B cell (primary cell): ENCODE measurements at regions of chr19 and their contacts with region 1.

Region 1: GRCh38 chr19:40974633-40975037 is 16.4 kb upstream of the CYP2B6 start:
- DNase-seq: peak; percentile 81
- ATAC-seq: peak; percentile 64
- H3K4me3 ChIP-seq: no peak overlapping the region
- H3K4me3 Mint-ChIP-seq: no peak overlapping the region
- H3K27ac ChIP-seq: no peak overlapping the region
- H3K27ac Mint-ChIP-seq: no peak overlapping the region
- H3K4me1 ChIP-seq: no peaks in the 10 kb centered on the region
- H3K4me1 Mint-ChIP-seq: peaks cover 1% of the 10 kb centered on the region
- H3K27me3 ChIP-seq: peaks cover 0 to 13% (median 6%) of the 10 kb centered on the region in 4 experiments
- H3K27me3 Mint-ChIP-seq: peaks cover 40% of the 10 kb centered on the region
- CTCF ChIP-seq: peak; percentile 93

Region 2: GRCh38 chr19:40908976-40909375 is 65.7 kb before region 1 on chr19:
- CTCF ChIA-PET with region 1: no interaction called
- POLR2A ChIA-PET with region 1: no interaction called
- intact Hi-C with region 1: no loop called
- DNase-seq: peak; percentile 66
- ATAC-seq: no peak
- H3K4me3 ChIP-seq: peak overlapping the region in 2 of 5 experiments; percentile 60 to 64
- H3K4me3 Mint-ChIP-seq: no peak overlapping the region
- H3K27ac ChIP-seq: no peak overlapping the region
- H3K27ac Mint-ChIP-seq: no peak overlapping the region
- H3K4me1 ChIP-seq: peaks cover 5 to 16% of the 10 kb centered on the region in 2 donors
- H3K4me1 Mint-ChIP-seq: peaks cover 5% of the 10 kb centered on the region
- H3K27me3 ChIP-seq: peaks cover 0 to 16% (median 0%) of the 10 kb centered on the region in 4 experiments
- H3K27me3 Mint-ChIP-seq: peaks cover 54% of the 10 kb centered on the region
- CTCF ChIP-seq: no peak

Region 3: GRCh38 chr19:41144403-41144802 is 169.8 kb after region 1 on chr19:
- CTCF ChIA-PET with region 1: interaction called, 15 read pairs
- POLR2A ChIA-PET with region 1: no interaction called
- intact Hi-C with region 1: no loop called
- DNase-seq: peak; percentile 83
- ATAC-seq: peak; percentile 86
- H3K4me3 ChIP-seq: no peak overlapping the region
- H3K4me3 Mint-ChIP-seq: no peak overlapping the region
- H3K27ac ChIP-seq: no peak overlapping the region
- H3K27ac Mint-ChIP-seq: no peak overlapping the region
- H3K4me1 ChIP-seq: no peaks in the 10 kb centered on the region
- H3K4me1 Mint-ChIP-seq: no peaks in the 10 kb centered on the region
- H3K27me3 ChIP-seq: peaks cover 0 to 4% (median 3%) of the 10 kb centered on the region in 4 experiments
- H3K27me3 Mint-ChIP-seq: peaks cover 18% of the 10 kb centered on the region
- CTCF ChIP-seq: peak; percentile 79

Region 4: GRCh38 chr19:41288673-41289505 is 314.3 kb after region 1 on chr19:
- CTCF ChIA-PET with region 1: no interaction called
- POLR2A ChIA-PET with region 1: interaction called, 15 read pairs
- intact Hi-C with region 1: no loop called
- DNase-seq: no peak
- ATAC-seq: no peak
- H3K4me3 ChIP-seq: no peak overlapping the region
- H3K4me3 Mint-ChIP-seq: no peak overlapping the region
- H3K27ac ChIP-seq: peak overlapping the region in 1 of 2 donors; percentile 15
- H3K27ac Mint-ChIP-seq: no peak overlapping the region
- H3K4me1 ChIP-seq: no peaks in the 10 kb centered on the region
- H3K4me1 Mint-ChIP-seq: no peaks in the 10 kb centered on the region
- H3K27me3 ChIP-seq: no peaks in the 10 kb centered on the region
- H3K27me3 Mint-ChIP-seq: no peaks in the 10 kb centered on the region
- CTCF ChIP-seq: no peak